CD14-positive monocyte (primary cell): ENCODE measurements at regions of chr17 and their contacts with region 1.

Region 1: GRCh38 chr17:46002311-46002972 is 3.4 kb downstream of the STH start:
- DNase-seq: peak; percentile 46 to 61 (median 56)
- H3K4me3 ChIP-seq: no peak overlapping the region
- H3K4me3 Mint-ChIP-seq: no peak overlapping the region
- H3K27ac ChIP-seq: no peak overlapping the region
- H3K27ac Mint-ChIP-seq: no peak overlapping the region
- H3K4me1 ChIP-seq: no peaks in the 10 kb centered on the region
- H3K4me1 Mint-ChIP-seq: no peaks in the 10 kb centered on the region
- H3K27me3 ChIP-seq: no peaks in the 10 kb centered on the region
- H3K27me3 Mint-ChIP-seq: peaks cover 2 to 6% (median 4%) of the 10 kb centered on the region in 3 donors
- CTCF ChIP-seq: peak; percentile 97

Region 2: DNA sequence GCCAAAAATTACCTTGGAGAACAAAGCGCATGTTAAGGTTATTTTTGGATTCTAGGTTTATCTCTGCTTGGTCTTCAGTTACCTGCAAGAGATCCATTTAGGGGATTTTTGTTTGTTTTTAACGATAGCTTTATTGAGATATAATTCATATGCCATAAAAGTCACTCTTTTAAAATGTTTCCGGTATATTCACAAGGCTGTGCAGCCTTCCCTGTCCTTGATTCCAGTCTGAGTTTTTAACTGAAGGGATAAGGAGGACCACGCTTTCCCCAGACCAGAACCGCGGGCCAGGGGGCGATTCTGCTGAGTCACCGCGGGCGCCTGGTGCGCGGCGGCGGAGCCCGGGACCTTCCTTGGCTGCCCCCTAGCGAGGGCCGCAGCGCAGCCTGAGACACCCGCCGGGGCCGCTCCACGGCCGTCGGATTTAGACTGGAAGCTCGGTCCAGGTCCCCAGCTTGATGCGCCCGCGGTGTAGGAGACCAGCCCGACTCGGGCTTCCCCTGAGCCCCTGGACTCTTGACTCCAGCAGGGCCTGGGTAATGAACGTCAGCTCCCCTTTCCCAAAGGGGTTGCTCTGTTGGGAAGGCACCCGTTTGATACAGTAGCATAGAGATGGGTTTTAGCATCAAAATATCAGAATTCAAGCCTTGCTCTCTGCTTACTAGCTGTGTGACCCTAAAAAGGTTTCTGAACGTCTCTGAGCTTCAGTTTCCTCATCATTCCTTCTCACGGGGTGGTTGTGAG is 53.4 kb before region 1 on chr17:
- intact Hi-C with region 1: no loop called
- DNase-seq: peak; percentile 34 to 57 (median 43)
- H3K4me3 ChIP-seq: no peak overlapping the region
- H3K4me3 Mint-ChIP-seq: peak overlapping the region in 1 of 2 donors; percentile 78
- H3K27ac ChIP-seq: no peak overlapping the region
- H3K27ac Mint-ChIP-seq: no peak overlapping the region
- H3K4me1 ChIP-seq: peaks cover 4 to 6% of the 10 kb centered on the region in 2 donors
- H3K4me1 Mint-ChIP-seq: peaks cover 6% of the 10 kb centered on the region
- H3K27me3 ChIP-seq: peaks cover 0 to 22% of the 10 kb centered on the region in 2 donors
- H3K27me3 Mint-ChIP-seq: peaks cover 27 to 38% (median 36%) of the 10 kb centered on the region in 3 donors
- CTCF ChIP-seq: peak; percentile 87

Region 3: DNA sequence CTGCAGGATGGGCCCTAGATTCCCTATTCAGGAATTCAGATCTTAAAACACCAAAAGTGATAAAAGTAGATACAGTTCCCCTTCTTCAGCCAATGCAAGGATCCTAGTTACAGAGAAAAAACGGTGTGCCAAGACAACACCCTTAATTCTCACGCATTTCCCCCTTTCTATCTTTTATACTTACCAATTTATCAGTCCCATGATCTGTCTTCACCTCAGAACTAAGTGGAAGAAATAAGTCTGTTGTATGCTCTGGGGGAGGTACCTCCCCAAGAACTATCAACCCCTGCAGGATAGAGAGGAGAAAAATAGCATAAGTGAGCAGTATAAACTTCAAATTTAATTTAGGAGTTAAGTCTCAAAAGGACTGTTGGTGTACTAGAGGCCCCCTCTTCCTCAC is 79.8 kb after region 1 on chr17:
- intact Hi-C with region 1: no loop called
- DNase-seq: no peak
- H3K4me3 ChIP-seq: no peak overlapping the region
- H3K4me3 Mint-ChIP-seq: no peak overlapping the region
- H3K27ac ChIP-seq: no peak overlapping the region
- H3K27ac Mint-ChIP-seq: peak overlapping the region in 3 of 7 donors; percentile 34 to 69 (median 38)
- H3K4me1 ChIP-seq: no peaks in the 10 kb centered on the region
- H3K4me1 Mint-ChIP-seq: peaks cover 4% of the 10 kb centered on the region
- H3K27me3 ChIP-seq: no peaks in the 10 kb centered on the region
- H3K27me3 Mint-ChIP-seq: peaks cover 0 to 3% (median 0%) of the 10 kb centered on the region in 3 donors
- CTCF ChIP-seq: no peak

Region 4: DNA sequence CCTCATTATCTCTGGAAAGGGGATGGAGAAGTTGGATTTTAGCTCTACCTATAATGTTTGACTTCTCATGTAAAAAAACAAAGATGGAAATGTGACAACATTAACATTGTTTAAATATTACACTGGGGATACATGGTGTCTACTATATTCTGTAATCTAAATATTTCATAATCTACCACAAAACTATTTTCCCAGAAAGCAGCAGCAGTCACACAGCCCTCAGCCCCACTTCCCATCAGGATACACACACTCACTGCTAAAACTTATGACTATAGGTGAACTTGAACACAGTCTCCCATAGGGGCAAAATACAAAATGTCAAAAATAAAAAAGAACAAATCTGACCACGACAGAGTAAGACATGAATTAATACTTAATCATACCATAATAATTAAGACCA is 95.1 kb after region 1 on chr17:
- intact Hi-C with region 1: no loop called
- DNase-seq: no peak
- H3K4me3 ChIP-seq: no peak overlapping the region
- H3K4me3 Mint-ChIP-seq: no peak overlapping the region
- H3K27ac ChIP-seq: no peak overlapping the region
- H3K27ac Mint-ChIP-seq: peak overlapping the region in 3 of 7 donors; percentile 68 to 86 (median 86)
- H3K4me1 ChIP-seq: peaks cover 0 to 11% of the 10 kb centered on the region in 2 donors
- H3K4me1 Mint-ChIP-seq: peaks cover 29% of the 10 kb centered on the region
- H3K27me3 ChIP-seq: no peaks in the 10 kb centered on the region
- H3K27me3 Mint-ChIP-seq: no peaks in the 10 kb centered on the region
- CTCF ChIP-seq: no peak

Region 5: DNA sequence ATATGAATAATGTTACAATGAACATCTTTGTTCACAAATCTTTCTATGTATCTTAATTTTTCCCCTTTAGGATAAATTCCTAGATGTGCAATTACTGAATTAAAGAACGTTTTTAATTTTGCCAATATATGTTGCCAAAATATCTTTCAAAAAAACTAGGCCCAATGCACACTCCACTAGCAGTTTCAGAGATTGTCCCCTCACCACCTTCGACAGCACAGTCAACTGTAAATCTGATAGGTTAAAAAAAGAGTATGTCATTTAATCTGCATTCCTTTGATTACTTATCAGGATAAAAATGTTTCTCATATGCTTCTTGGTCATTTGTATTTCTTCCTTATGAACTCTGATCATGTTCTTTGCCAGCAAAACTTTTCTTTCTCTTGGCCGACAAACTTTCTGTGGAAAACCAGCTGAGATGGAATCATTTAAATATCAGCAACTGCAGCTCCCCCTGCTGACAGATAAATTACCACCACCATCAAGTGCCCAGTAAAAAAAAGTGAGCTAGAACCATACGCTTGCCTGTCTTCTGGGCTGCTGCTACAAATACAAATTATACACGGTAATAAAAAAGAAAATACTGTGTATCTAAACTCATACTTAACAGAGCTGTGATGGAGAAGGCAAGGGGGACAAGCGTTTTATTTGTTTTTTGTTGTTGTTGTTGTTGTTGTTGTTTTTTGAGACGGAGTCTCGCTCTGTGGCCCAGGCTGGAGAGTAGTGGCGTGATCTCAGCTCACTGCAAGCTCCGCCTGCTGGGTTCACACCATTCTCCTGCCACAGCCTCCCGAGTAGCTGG is 210.4 kb after region 1 on chr17:
- intact Hi-C with region 1: loop called (anchors 2 kb)
- DNase-seq: peak; percentile 61 to 65 (median 62)
- H3K4me3 ChIP-seq: no peak overlapping the region
- H3K4me3 Mint-ChIP-seq: no peak overlapping the region
- H3K27ac ChIP-seq: no peak overlapping the region
- H3K27ac Mint-ChIP-seq: peak overlapping the region in 1 of 7 donors; percentile 3
- H3K4me1 ChIP-seq: peaks cover 4 to 5% of the 10 kb centered on the region in 2 donors
- H3K4me1 Mint-ChIP-seq: peaks cover 17% of the 10 kb centered on the region
- H3K27me3 ChIP-seq: no peaks in the 10 kb centered on the region
- H3K27me3 Mint-ChIP-seq: peaks cover 0 to 2% (median 0%) of the 10 kb centered on the region in 3 donors
- CTCF ChIP-seq: peak; percentile 83